HepG2 (cell line): ENCODE measurements at regions of chr18 and their contacts with region 1.

Region 1: DNA sequence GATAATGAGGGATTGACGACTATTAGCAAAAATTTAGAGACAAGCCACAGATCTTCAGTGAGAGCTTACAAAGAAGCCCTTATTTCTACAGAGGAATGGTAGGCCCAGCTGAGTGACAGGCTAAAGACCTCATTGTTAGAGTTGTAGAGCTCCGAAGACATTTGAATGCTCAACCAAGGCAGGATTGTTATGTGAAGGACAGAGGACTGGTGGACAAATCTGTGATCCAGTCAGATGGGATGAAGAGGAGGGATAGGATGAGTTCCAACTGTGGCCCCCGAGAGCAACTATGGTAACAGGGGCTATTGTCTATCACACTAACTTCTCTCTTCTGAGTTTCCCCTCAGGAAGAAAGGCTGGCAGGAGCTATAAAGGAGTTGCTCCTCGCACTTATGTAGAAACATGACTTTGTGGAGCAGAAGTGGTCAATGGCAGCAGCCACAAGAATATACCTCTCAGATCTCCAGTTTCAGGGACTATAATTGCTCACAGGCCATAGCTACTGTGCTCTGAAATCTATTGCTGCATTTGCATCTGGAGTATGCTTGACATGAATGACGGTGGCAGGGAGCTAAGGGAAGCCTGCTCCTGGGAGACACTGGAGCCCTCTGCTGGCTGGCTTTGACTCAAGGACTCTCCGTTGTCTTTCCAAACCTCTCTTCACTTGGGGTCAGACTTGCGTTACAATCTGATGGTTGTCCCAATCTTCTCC is 50.3 kb upstream of the GREB1L start:
- DNase-seq: peak; percentile 42
- ATAC-seq: peak; percentile 95
- H3K4me3 ChIP-seq: no peak overlapping the region
- H3K27ac ChIP-seq: no peak overlapping the region
- H3K4me1 ChIP-seq: no peaks in the 10 kb centered on the region
- H3K27me3 ChIP-seq: no peaks in the 10 kb centered on the region
- CTCF ChIP-seq: peak; percentile 74
- EP300 ChIP-seq: no peak
- POLR2A ChIP-seq: no peak
- RAD21 ChIP-seq: no peak

Region 2: DNA sequence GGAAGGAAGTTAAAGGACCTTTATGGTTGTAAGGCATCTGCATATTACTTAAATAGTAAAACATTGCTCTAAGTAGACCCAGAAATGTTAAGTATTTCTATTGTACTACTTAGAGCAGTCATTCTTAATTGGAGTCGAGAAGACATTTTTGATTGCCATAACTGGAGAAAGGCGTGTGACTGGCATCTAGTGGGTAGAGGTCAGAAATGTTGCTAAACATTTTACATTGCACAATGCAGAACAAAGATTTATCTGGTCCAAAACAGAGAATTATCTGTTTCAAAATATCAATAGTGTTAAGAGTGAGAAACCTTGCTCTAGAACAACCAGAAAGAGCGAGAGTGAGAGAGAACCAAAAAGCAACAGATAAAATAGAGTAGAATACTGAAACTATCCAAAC is 56.9 kb before region 1 on chr18:
- CTCF ChIA-PET with region 1: no interaction called
- POLR2A ChIA-PET with region 1: no interaction called
- in situ Hi-C with region 1: no loop called
- intact Hi-C with region 1: no loop called
- DNase-seq: no peak
- ATAC-seq: no peak
- H3K4me3 ChIP-seq: no peak overlapping the region
- H3K27ac ChIP-seq: no peak overlapping the region
- H3K4me1 ChIP-seq: no peaks in the 10 kb centered on the region
- H3K27me3 ChIP-seq: no peaks in the 10 kb centered on the region
- CTCF ChIP-seq: 0 out of 2 replicates have a peak, but pooled peaks have one; percentile 25
- EP300 ChIP-seq: no peak
- POLR2A ChIP-seq: no peak
- RAD21 ChIP-seq: no peak

Region 3: DNA sequence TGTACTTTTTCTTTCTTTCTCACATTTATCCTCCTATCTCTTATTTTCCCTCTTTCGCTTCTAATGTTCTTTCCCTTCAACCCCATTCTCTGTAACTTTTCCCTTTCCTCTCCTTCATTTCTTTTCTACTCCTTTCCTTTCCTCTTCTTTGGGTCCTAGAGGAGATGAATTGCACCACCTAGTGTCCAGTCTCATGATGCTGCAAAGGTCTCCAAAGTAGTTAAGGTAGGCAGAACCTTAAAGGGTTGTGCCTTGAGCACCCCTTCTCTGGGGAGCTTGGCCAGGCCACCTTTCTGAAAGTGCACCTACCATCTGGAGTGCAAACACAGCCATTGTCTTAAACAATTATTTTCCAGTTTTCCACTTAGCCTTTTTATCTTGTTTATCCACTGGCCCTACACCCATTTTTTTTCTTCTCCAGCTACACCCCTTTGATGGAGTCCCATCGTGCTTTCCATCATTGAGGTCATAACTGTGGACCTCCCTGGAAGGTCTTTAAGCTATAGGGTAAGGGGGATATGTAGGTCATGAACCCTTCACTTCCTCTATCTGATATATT is 252.8 kb after region 1 on chr18:
- CTCF ChIA-PET with region 1: interaction called, 70 read pairs
- POLR2A ChIA-PET with region 1: no interaction called
- in situ Hi-C with region 1: loop called (anchors 5 kb)
- intact Hi-C with region 1: loop called (anchors 1 kb)
- DNase-seq: peak; percentile 54
- ATAC-seq: peak; percentile 71; the same call in 2 of the 3 replicates
- H3K4me3 ChIP-seq: no peak overlapping the region
- H3K27ac ChIP-seq: no peak overlapping the region
- H3K4me1 ChIP-seq: peaks cover 3% of the 10 kb centered on the region; the same call in 1 of the 2 replicates
- H3K27me3 ChIP-seq: no peaks in the 10 kb centered on the region
- CTCF ChIP-seq: peak; percentile 82
- EP300 ChIP-seq: no peak
- POLR2A ChIP-seq: no peak
- RAD21 ChIP-seq: peak; percentile 60

Region 4: GRCh38 chr18:21798126-21798525 is 606.4 kb after region 1 on chr18:
- CTCF ChIA-PET with region 1: no interaction called
- POLR2A ChIA-PET with region 1: no interaction called
- in situ Hi-C with region 1: no loop called
- intact Hi-C with region 1: loop called (anchors 10 kb)
- DNase-seq: no peak
- ATAC-seq: no peak
- H3K4me3 ChIP-seq: no peak overlapping the region
- H3K27ac ChIP-seq: no peak overlapping the region
- H3K4me1 ChIP-seq: peaks cover 10% of the 10 kb centered on the region
- H3K27me3 ChIP-seq: no peaks in the 10 kb centered on the region
- CTCF ChIP-seq: no peak
- EP300 ChIP-seq: no peak
- POLR2A ChIP-seq: no peak
- RAD21 ChIP-seq: no peak